T-cell (primary cell): ENCODE measurements at regions of chr17 and their contacts with region 1.

Region 1: DNA sequence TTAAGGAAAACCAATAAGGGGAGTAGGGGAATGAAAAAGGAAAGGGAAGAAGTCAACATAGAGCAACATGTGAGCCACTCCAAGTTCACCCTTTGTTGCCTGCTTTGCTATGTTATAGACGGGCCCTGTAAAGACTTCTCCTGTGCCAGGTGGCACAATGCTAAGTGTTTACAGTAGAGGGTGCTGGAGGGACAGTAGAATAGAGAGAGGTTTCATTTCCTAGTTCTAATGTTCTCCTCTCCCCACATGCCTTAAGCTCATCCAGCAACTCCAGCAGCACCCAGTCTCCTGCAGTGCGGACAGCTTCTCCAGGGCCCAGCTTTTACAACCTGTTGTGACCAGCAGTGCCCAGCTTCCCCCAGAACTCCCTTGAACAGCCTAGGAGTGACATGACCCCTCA is 468.1 kb downstream of the HS3ST3B1 start:
- DNase-seq: no peak
- ATAC-seq: no peak
- H3K4me3 ChIP-seq: no peak overlapping the region
- H3K4me3 Mint-ChIP-seq: no peak overlapping the region
- H3K27ac ChIP-seq: no peak overlapping the region
- H3K27ac Mint-ChIP-seq: no peak overlapping the region
- H3K4me1 ChIP-seq: no peaks in the 10 kb centered on the region
- H3K4me1 Mint-ChIP-seq: no peaks in the 10 kb centered on the region
- H3K27me3 ChIP-seq: peaks cover 0 to 2% of the 10 kb centered on the region in 2 experiments
- H3K27me3 Mint-ChIP-seq: peaks cover 3 to 5% of the 10 kb centered on the region in 2 donors

Region 2: DNA sequence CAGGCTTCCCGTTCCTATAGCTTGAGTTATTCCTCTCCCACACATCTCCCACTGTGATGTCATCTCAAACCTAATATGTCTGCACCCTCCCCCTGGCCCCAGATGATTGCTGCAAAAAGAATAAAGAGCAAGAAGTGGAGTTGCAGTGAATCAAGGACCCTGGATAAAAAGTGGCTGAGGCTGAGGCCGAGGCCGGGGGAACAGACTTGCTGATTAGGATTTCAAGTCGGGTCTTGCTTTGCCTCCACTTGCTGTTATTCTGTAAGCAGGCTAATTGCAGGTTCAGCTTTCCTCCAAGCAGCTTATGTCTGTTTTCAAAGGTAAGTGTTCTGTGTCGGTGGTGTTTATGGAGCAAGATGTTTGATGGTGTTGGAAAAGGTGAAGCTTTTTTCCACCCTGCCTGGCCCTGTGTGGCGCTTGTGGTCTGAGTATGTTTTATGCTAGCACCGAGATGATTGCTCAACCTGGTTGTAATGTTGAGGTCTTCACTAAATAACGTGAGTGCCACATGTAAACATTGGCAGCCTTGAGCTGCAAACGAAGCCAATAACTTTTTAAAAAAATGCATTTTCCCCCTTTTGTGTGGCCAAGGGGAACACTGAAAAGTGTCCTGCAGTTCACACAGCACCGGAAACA is 452.7 kb before region 1 on chr17:
- CTCF ChIA-PET with region 1: no interaction called
- POLR2A ChIA-PET with region 1: interaction called in 1 of 2 experiments, 10 read pairs
- DNase-seq: no peak
- ATAC-seq: no peak
- H3K4me3 ChIP-seq: no peak overlapping the region
- H3K4me3 Mint-ChIP-seq: peak overlapping the region in 1 of 3 donors; percentile 52
- H3K27ac ChIP-seq: no peak overlapping the region
- H3K27ac Mint-ChIP-seq: peak overlapping the region; percentile 29 to 50
- H3K4me1 ChIP-seq: peaks cover 12 to 52% of the 10 kb centered on the region in 2 experiments
- H3K4me1 Mint-ChIP-seq: peaks cover 80 to 88% (median 88%) of the 10 kb centered on the region in 3 donors
- H3K27me3 ChIP-seq: no peaks in the 10 kb centered on the region
- H3K27me3 Mint-ChIP-seq: no peaks in the 10 kb centered on the region